WTC11 (cell line): ENCODE measurements at regions of chr11 and their contacts with region 1.

Region 1: DNA sequence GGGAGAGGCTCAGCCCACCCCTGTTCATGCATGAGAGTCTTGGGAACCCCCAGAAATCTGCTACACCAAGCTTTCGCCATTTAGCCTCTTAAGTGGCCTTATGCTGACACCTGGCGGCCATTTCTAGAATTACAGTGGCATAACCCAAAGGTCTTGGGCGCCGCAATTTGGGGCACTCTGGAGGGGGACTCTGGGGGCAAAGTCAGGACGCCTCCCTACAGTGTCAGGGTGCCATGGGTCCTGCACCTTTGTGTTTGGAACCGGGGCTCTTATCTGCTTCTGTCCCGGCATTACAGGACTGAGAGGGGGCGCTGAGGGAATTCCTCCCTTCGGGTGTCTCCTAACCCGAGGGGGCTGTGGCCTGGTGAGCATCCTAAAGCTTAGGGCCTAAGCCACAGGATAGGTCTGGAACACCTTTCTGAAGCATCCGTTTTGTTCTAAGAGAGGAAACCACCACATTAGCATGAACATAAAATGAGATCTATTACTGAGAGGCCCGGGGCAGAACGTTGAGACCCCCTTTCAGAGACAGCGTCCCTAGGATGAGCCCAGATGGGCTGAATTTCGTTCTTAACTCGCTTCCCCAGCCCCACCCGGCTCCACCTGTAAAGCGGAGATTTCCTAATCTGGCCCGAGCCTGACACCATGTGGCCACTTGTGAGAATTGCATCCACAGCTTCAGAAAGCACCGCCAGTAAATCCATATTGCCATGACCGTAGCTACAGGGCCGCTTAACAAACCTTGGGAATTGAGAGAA is 9.3 kb downstream of the INS start:
- DNase-seq: peak; percentile 91
- ATAC-seq: peak; percentile 50
- H3K4me3 Mint-ChIP-seq: no peak overlapping the region
- H3K27ac Mint-ChIP-seq: no peak overlapping the region
- H3K4me1 Mint-ChIP-seq: peaks cover 13% of the 10 kb centered on the region
- H3K27me3 Mint-ChIP-seq: peaks cover 45% of the 10 kb centered on the region
- CTCF ChIP-seq: peak; percentile 89

Region 2: DNA sequence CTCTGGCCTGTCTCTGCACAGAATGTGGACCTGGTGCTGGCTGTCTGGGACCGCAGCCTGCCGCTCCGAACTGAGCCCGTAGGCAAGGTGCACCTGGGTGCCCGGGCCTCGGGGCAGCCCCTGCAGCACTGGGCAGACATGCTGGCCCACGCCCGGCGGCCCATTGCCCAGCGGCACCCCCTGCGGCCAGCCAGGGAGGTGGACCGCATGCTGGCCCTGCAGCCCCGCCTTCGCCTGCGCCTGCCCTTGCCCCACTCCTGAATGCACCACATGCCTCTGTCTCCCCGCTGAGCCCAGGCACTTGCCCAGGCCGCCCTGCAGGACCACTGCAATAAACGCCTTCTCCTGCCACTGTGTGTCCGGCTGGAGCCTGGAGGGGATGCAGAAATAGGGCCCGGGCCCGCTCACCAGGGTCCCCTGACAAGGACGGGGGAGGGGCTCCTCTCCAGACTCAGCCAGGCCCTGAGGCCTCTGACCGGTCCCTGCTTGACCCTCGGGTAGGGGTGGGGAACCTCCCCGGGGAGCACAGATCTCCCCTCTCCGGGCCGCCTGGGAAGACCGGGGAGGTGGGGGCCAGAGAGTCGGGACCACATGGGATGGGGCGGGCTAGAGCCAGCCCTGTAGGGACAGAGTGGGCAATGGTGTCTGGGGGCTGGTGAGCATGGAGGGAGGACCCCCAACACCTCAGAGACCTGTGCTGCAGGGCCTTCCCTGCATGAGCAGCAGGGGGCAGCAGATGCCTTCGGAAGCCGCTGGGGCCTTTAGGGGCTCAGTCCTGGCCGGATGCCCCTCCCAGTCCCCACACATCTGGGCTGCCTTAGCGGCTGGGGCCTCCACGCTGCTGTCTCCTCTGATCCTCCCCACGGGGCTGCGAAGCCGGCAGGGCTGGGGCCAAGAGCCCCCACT is 314.3 kb before region 1 on chr11:
- CTCF ChIA-PET with region 1: interaction called, 110 read pairs
- POLR2A ChIA-PET with region 1: no interaction called
- DNase-seq: peak; percentile 88
- ATAC-seq: peak; percentile 84
- H3K4me3 Mint-ChIP-seq: no peak overlapping the region
- H3K27ac Mint-ChIP-seq: no peak overlapping the region
- H3K4me1 Mint-ChIP-seq: no peaks in the 10 kb centered on the region
- H3K27me3 Mint-ChIP-seq: peaks cover 5% of the 10 kb centered on the region
- CTCF ChIP-seq: peak; percentile 57

Region 3: DNA sequence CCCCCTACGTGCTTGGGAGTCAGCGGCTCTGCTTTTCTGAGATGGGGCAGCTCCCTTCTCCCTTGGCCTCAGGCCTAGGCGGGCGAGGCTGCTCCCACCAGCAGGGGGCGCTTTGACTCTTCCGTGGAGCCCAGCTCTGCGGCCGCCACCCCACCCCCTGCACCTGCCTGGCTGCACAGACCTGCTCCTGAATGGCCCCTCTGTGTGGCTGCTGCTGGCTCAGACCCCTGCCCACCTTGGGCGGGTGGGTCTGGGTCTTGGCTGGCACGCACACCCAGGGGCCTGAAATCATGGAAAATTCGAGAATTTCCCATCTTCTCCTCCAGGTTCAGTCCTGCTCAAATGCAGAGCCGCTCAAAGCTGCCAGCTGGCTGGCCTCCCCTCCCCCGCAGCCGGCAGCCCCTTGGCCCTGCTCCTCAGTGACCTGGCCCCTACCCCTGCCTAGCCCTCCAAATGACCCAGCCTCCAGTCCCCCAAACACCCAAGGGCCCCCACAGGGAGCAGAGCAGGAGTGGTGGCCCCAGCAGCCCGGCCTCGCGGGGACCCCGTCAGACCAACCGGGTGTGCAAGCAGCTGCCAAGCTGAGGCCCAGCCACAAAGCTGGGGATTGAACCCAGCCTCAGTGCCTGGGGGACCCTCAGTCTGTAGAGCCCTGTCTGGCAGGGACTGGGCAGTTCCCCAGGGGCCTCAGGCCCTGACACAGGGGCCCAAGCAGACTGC is 269.0 kb before region 1 on chr11:
- CTCF ChIA-PET with region 1: interaction called, 159 read pairs
- POLR2A ChIA-PET with region 1: no interaction called
- DNase-seq: peak; percentile 89
- ATAC-seq: peak; percentile 97
- H3K4me3 Mint-ChIP-seq: no peak overlapping the region
- H3K27ac Mint-ChIP-seq: no peak overlapping the region
- H3K4me1 Mint-ChIP-seq: no peaks in the 10 kb centered on the region
- H3K27me3 Mint-ChIP-seq: no peaks in the 10 kb centered on the region
- CTCF ChIP-seq: peak; percentile 95

Region 4: GRCh38 chr11:1970956-1971355 is 180.7 kb before region 1 on chr11:
- CTCF ChIA-PET with region 1: interaction called, 11 read pairs
- POLR2A ChIA-PET with region 1: no interaction called
- DNase-seq: peak; percentile 6
- ATAC-seq: no peak
- H3K4me3 Mint-ChIP-seq: no peak overlapping the region
- H3K27ac Mint-ChIP-seq: no peak overlapping the region
- H3K4me1 Mint-ChIP-seq: no peaks in the 10 kb centered on the region
- H3K27me3 Mint-ChIP-seq: no peaks in the 10 kb centered on the region
- CTCF ChIP-seq: no peak

Region 5: GRCh38 chr11:2036863-2037486 is 114.7 kb before region 1 on chr11:
- CTCF ChIA-PET with region 1: interaction called, 761 read pairs
- POLR2A ChIA-PET with region 1: interaction called, 3 read pairs
- DNase-seq: no peak
- ATAC-seq: peak; percentile 76
- H3K4me3 Mint-ChIP-seq: no peak overlapping the region
- H3K27ac Mint-ChIP-seq: no peak overlapping the region
- H3K4me1 Mint-ChIP-seq: no peaks in the 10 kb centered on the region
- H3K27me3 Mint-ChIP-seq: no peaks in the 10 kb centered on the region
- CTCF ChIP-seq: no peak

Region 6: GRCh38 chr11:2137202-2138071 is 14.2 kb before region 1 on chr11:
- CTCF ChIA-PET with region 1: interaction called, 101 read pairs
- POLR2A ChIA-PET with region 1: interaction called, 3 read pairs
- DNase-seq: peak; percentile 77
- ATAC-seq: peak; percentile 62
- H3K4me3 Mint-ChIP-seq: peak overlapping the region; percentile 61
- H3K27ac Mint-ChIP-seq: no peak overlapping the region
- H3K4me1 Mint-ChIP-seq: peaks cover 11% of the 10 kb centered on the region
- H3K27me3 Mint-ChIP-seq: peaks cover 85% of the 10 kb centered on the region
- CTCF ChIP-seq: no peak

Region 7: GRCh38 chr11:2489083-2489482 is 337.4 kb after region 1 on chr11:
- CTCF ChIA-PET with region 1: no interaction called
- POLR2A ChIA-PET with region 1: no interaction called
- DNase-seq: no peak
- ATAC-seq: no peak
- H3K4me3 Mint-ChIP-seq: no peak overlapping the region
- H3K27ac Mint-ChIP-seq: no peak overlapping the region
- H3K4me1 Mint-ChIP-seq: no peaks in the 10 kb centered on the region
- H3K27me3 Mint-ChIP-seq: peaks cover 100% of the 10 kb centered on the region
- CTCF ChIP-seq: no peak

Region 8: DNA sequence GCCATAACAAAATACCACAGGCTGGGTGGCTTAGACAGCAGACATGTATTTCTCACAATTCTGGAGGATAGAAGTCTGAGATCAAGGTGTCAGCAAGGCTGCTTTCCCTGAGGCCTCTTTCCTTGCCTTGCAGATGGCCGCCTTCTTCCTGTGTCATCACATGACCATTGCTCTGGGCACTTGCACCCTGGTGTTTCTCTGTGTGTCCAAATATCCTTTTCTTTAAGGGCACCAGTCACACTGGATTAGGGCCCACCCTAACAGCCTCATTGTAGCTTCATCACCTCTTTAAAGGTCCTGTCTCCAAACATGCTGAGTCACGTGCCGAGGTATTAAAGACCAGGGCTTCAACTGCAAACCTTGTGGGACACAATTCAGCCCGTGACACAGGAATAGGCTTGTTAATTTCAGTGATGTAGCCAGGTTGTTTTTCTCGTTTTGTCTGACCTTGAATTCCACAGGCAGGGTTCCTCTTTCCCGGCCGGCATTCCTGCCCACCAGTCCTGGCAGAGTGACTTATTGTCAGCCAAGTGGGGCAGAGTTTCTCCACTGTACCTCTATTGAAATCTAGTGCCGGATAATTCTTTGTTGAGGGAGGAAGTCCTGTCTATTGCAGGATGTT is 448.0 kb after region 1 on chr11:
- CTCF ChIA-PET with region 1: no interaction called
- POLR2A ChIA-PET with region 1: no interaction called
- DNase-seq: no peak
- ATAC-seq: no peak; the same call in 1 of the 2 replicates
- H3K4me3 Mint-ChIP-seq: no peak overlapping the region
- H3K27ac Mint-ChIP-seq: no peak overlapping the region
- H3K4me1 Mint-ChIP-seq: peaks cover 9% of the 10 kb centered on the region
- H3K27me3 Mint-ChIP-seq: peaks cover 99% of the 10 kb centered on the region; the same call in 1 of the 2 replicates
- CTCF ChIP-seq: no peak